HepG2 (cell line): ENCODE measurements at regions of chr13 and their contacts with region 1.

Region 1: DNA sequence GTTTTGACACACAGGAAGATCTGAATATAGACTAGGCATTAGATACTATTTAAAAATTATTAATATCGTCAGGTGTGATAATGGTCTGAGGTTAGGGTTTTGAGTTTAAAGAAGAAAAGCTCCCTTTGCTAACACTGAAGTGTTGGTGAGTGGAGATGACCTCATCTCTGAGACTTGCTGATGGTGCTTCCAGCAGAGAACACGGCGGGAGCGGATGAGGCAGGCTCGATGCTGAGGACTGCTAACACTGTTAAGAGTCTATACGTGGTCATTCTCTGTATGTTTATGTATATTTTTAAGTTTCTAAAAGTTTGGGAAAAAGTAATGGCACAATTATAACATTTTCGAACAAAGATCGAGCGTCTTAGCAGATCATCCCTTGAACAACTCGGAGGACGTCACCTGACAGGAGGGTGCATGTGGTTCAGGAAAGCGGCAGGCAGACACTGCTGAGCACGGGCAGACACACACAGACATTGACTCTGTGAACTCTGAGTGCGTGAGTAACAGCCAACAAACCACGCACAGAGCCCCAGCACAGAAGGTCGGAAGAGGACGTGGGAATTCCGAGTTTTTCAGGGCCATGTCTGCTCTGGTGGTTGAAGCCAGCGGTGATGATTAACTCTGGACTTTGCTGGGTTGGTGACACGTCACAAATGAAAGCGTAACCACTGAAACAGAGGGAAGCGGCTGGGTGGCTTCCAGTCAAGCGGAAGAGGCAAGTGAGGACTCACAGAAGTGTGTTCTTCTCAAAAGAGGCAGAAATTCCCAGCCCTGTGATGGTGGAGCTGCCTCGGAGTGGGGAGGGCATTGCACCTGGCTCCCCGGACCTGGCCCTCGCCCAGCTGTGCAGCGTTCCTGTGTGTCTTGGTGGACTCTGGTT is 91.9 kb upstream of the TEX29 start:
- DNase-seq: no peak
- ATAC-seq: no peak
- H3K4me3 ChIP-seq: no peak overlapping the region
- H3K27ac ChIP-seq: no peak overlapping the region
- H3K4me1 ChIP-seq: peaks cover 3% of the 10 kb centered on the region; the same call in 1 of the 2 replicates
- H3K27me3 ChIP-seq: no peaks in the 10 kb centered on the region
- CTCF ChIP-seq: no peak
- EP300 ChIP-seq: no peak
- POLR2A ChIP-seq: no peak
- RAD21 ChIP-seq: no peak

Region 2: GRCh38 chr13:110593430-110594130 is 634.9 kb before region 1 on chr13:
- CTCF ChIA-PET with region 1: no interaction called
- POLR2A ChIA-PET with region 1: no interaction called
- in situ Hi-C with region 1: no loop called
- intact Hi-C with region 1: loop called (anchors 10 kb)
- DNase-seq: peak; percentile 65
- ATAC-seq: peak; percentile 89
- H3K4me3 ChIP-seq: no peak overlapping the region
- H3K27ac ChIP-seq: no peak overlapping the region
- H3K4me1 ChIP-seq: peaks cover 19% of the 10 kb centered on the region
- H3K27me3 ChIP-seq: no peaks in the 10 kb centered on the region
- CTCF ChIP-seq: peak; percentile 75
- EP300 ChIP-seq: no peak
- POLR2A ChIP-seq: no peak
- RAD21 ChIP-seq: peak; percentile 36; the same call in 1 of the 2 replicates

Region 3: GRCh38 chr13:111066544-111066943 is 162.0 kb before region 1 on chr13:
- CTCF ChIA-PET with region 1: interaction called, 9 read pairs
- POLR2A ChIA-PET with region 1: no interaction called
- in situ Hi-C with region 1: loop called (anchors 10 kb)
- intact Hi-C with region 1: no loop called
- DNase-seq: no peak
- ATAC-seq: peak; percentile 19; the same call in 2 of the 3 replicates
- H3K4me3 ChIP-seq: no peak overlapping the region
- H3K27ac ChIP-seq: no peak overlapping the region
- H3K4me1 ChIP-seq: 0 out of 2 replicates have a peak, but pooled peaks cover 5% of the 10 kb centered on the region
- H3K27me3 ChIP-seq: peaks cover 3 to 27% of the 10 kb centered on the region in 2 experiments; a peak in 4 of 5 replicates
- CTCF ChIP-seq: no peak
- EP300 ChIP-seq: no peak
- POLR2A ChIP-seq: no peak
- RAD21 ChIP-seq: no peak

Region 4: DNA sequence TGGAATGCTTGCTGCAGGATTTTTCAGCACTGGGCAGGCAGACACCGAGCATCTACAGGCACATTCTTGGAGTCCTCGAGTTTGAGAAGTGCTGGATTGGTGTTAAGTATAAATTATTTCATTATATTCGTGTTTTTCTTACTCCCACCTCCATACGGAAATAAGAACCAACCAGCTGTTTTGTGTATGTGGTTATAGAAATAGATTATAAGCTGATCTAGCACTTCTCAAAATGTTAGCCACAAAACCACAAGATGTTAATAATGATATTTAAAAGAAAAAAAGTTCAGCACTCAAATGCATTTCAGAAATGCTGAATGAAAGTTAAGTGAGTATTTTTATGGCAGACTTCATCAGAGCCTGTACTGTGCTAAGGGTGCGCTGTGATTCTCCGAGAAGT is 67.9 kb after region 1 on chr13:
- CTCF ChIA-PET with region 1: no interaction called
- POLR2A ChIA-PET with region 1: no interaction called
- in situ Hi-C with region 1: no loop called
- intact Hi-C with region 1: no loop called
- DNase-seq: no peak
- ATAC-seq: no peak
- H3K4me3 ChIP-seq: no peak overlapping the region
- H3K27ac ChIP-seq: no peak overlapping the region
- H3K4me1 ChIP-seq: no peaks in the 10 kb centered on the region
- H3K27me3 ChIP-seq: no peaks in the 10 kb centered on the region
- CTCF ChIP-seq: no peak
- EP300 ChIP-seq: no peak
- POLR2A ChIP-seq: no peak
- RAD21 ChIP-seq: no peak